H1 (cell line): ENCODE measurements at regions of chr2 and their contacts with region 1.

Region 1: GRCh38 chr2:36544638-36545338 is 53.2 kb downstream of the FEZ2 start:
- DNase-seq: no peak
- H3K4me3 ChIP-seq: no peak overlapping the region
- H3K27ac ChIP-seq: no peak overlapping the region
- H3K4me1 ChIP-seq: no peaks in the 10 kb centered on the region
- H3K27me3 ChIP-seq: no peaks in the 10 kb centered on the region
- CTCF ChIP-seq: peak in 1 of 3 experiments; percentile 33; a peak in 2 of 4 replicates
- EP300 ChIP-seq: no peak
- POLR2A ChIP-seq: no peak
- RAD21 ChIP-seq: peak; percentile 23 to 38; a peak in 2 of 4 replicates

Region 2: GRCh38 chr2:36561237-36561944 is 16.6 kb after region 1 on chr2:
- CTCF ChIA-PET with region 1: interaction called, 11 read pairs
- POLR2A ChIA-PET with region 1: no interaction called
- DNase-seq: peak in 1 of 2 experiments; percentile 17
- H3K4me3 ChIP-seq: no peak overlapping the region
- H3K27ac ChIP-seq: no peak overlapping the region
- H3K4me1 ChIP-seq: peaks cover 0 to 7% (median 2%) of the 10 kb centered on the region in 4 experiments; a peak in 4 of 7 replicates
- H3K27me3 ChIP-seq: no peaks in the 10 kb centered on the region
- CTCF ChIP-seq: no peak
- EP300 ChIP-seq: no peak
- POLR2A ChIP-seq: no peak
- RAD21 ChIP-seq: no peak